ENCODE measurements at regions of chr20 and their contacts with region 1.

Region 1: DNA sequence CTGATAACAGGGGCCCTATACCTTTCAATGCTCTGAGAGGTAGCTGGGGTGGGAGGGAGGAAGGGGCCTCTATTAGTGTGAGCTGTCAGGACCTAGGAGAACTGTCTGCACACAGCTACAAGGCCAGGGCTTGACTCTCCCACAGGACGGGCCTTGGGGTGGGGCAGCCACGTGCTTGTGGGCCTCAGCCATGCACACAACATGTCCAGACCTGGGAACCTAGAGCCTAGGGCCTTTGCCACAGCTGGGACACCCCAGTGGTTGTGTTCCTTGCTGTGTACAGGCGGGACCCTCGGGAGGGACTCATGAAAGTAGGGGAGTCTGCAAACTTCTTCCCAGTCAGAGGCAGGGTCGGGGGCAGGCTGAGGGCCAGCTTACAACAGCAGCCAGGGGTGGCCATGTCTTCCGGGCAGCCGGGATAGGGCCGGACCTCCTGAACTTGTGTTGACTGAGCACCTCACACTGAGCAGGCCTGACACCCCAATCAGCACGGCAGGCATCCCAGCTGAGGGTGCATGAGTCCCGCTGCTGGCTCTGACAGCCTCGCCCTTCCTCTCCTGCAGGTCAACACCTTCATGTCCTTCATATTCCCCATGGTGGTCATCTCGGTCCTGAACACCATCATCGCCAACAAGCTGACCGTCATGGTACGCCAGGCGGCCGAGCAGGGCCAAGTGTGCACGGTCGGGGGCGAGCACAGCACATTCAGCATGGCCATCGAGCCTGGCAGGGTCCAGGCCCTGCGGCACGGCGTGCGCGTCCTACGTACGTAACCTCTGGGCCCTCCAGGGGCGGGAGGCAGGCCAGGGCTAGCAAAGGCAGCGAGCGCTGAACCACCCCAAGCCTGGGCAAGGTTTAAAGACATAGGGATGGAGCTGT is 41.9 kb upstream of the MRGBP start:
- DNase-seq: no peak
- ATAC-seq: 0 out of 2 replicates have a peak, but pooled peaks have one; percentile 35
- H3K4me3 ChIP-seq: no peak overlapping the region
- H3K27ac ChIP-seq: no peak overlapping the region
- H3K4me1 ChIP-seq: peaks cover 17% of the 10 kb centered on the region
- H3K27me3 ChIP-seq: no peaks in the 10 kb centered on the region
- CTCF ChIP-seq: no peak

Region 2: DNA sequence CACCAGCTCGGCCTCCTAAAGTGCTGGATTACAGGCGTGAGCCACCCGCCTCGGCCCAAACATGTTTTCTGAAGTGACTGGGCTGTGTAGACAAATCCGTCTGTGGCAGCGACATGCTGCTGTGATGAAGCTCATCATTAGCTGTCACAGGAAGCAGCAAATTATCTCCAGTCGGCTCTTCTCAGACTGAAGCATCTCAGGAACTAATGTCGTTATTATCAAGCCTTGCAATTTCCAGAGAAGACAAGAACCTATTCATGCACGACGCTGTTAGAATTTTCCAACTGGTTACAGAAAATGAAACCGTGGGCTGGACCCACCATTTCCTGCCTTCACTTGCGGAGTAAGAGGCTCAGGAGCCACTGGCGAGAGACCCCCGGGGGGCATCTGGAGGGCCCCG is 62.9 kb before region 1 on chr20:
- CTCF ChIA-PET with region 1: no interaction called
- POLR2A ChIA-PET with region 1: interaction called, 14 read pairs
- in situ Hi-C with region 1: no loop called
- intact Hi-C with region 1: no loop called
- DNase-seq: no peak
- ATAC-seq: no peak
- H3K4me3 ChIP-seq: no peak overlapping the region
- H3K27ac ChIP-seq: no peak overlapping the region
- H3K4me1 ChIP-seq: peaks cover 8% of the 10 kb centered on the region
- H3K27me3 ChIP-seq: no peaks in the 10 kb centered on the region
- CTCF ChIP-seq: no peak